ENCODE measurements at regions of chr1 and their contacts with region 1.

Region 1: GRCh38 chr1:15684468-15685291 is 560 bp downstream of the PLEKHM2 start:
- DNase-seq: peak; percentile 77
- H3K4me3 ChIP-seq: peak overlapping the region; percentile 66 to 97 (median 82)
- H3K27ac ChIP-seq: peak overlapping the region; percentile 87 to 97 (median 92)
- H3K4me1 ChIP-seq: peaks cover 0 to 22% (median 16%) of the 10 kb centered on the region in 4 donors
- H3K27me3 ChIP-seq: no peaks in the 10 kb centered on the region
- CTCF ChIP-seq: peak in 3 of 4 experiments; percentile 8 to 18 (median 11)
- EP300 ChIP-seq: no peak
- POLR2A ChIP-seq: no peak

Region 2: DNA sequence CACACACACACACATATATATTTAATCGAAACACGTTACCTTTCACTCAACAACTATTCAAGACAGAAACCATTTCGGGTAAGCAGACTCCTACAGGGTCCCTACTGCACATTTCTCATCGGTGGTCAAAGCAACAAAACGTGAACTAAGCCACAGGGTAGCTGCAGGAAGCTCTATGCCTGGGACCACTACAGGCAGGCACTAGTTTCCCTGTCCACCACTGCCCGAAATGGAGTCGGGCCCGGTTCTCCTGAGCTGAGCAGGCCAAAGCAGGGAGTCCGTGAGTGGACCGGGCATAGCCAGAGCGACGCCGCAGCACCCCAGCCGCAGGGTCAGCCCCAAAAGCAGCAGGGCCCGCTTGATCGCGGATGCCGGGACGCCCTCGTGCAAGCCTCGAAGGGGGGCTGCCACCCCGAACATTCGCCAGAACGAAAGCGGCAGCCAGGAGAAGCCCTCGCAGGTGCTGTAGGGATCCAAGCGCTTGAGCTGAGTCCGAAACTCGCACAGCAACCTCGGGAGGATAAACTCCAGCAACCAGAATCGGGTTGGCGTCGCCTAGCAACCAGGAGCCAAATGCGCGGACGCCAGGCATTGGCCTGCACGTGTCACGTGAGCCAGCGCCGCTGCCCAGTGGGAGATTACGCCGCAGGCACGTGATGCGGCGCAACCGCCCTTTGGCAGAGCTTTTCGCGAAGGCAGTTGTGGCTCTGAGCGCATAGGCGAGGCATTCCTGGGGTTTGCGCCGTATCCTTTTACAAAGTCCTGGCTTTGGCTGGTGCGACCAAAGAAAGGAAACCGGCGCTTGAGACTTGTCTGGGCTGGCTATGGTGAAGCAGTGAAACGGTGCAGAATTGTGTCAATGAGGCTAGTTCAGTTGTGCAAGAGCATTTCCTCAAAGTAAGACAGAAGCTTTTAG is 81.4 kb before region 1 on chr1:
- intact Hi-C with region 1: loop called (anchors 5 kb)
- DNase-seq: peak; percentile 99
- H3K4me3 ChIP-seq: peak overlapping the region; percentile 63 to 83 (median 76)
- H3K27ac ChIP-seq: peak overlapping the region; percentile 86 to 91 (median 88)
- H3K4me1 ChIP-seq: peaks cover 0 to 22% (median 16%) of the 10 kb centered on the region in 4 donors
- H3K27me3 ChIP-seq: no peaks in the 10 kb centered on the region
- CTCF ChIP-seq: no peak
- EP300 ChIP-seq: no peak
- POLR2A ChIP-seq: peak; percentile 36 to 38

Region 3: GRCh38 chr1:15703562-15703961 is 18.9 kb after region 1 on chr1:
- intact Hi-C with region 1: loop called (anchors 2 kb)
- DNase-seq: peak; percentile 94
- H3K4me3 ChIP-seq: peak overlapping the region in 2 of 4 donors; percentile 4 to 21
- H3K27ac ChIP-seq: peak overlapping the region; percentile 86 to 90 (median 89)
- H3K4me1 ChIP-seq: peaks cover 0 to 63% (median 59%) of the 10 kb centered on the region in 4 donors
- H3K27me3 ChIP-seq: no peaks in the 10 kb centered on the region
- CTCF ChIP-seq: no peak
- EP300 ChIP-seq: peak in 2 of 4 donors; percentile 44 to 74
- POLR2A ChIP-seq: no peak

Region 4: GRCh38 chr1:15741183-15741850 is 56.6 kb after region 1 on chr1:
- intact Hi-C with region 1: loop called (anchors 2 kb)
- DNase-seq: peak; percentile 91
- H3K4me3 ChIP-seq: no peak overlapping the region
- H3K27ac ChIP-seq: no peak overlapping the region
- H3K4me1 ChIP-seq: peaks cover 0 to 5% (median under 1%) of the 10 kb centered on the region in 4 donors
- H3K27me3 ChIP-seq: no peaks in the 10 kb centered on the region
- CTCF ChIP-seq: peak; percentile 77 to 93 (median 84)
- EP300 ChIP-seq: no peak
- POLR2A ChIP-seq: peak in 1 of 2 donors; percentile 27

Region 5: DNA sequence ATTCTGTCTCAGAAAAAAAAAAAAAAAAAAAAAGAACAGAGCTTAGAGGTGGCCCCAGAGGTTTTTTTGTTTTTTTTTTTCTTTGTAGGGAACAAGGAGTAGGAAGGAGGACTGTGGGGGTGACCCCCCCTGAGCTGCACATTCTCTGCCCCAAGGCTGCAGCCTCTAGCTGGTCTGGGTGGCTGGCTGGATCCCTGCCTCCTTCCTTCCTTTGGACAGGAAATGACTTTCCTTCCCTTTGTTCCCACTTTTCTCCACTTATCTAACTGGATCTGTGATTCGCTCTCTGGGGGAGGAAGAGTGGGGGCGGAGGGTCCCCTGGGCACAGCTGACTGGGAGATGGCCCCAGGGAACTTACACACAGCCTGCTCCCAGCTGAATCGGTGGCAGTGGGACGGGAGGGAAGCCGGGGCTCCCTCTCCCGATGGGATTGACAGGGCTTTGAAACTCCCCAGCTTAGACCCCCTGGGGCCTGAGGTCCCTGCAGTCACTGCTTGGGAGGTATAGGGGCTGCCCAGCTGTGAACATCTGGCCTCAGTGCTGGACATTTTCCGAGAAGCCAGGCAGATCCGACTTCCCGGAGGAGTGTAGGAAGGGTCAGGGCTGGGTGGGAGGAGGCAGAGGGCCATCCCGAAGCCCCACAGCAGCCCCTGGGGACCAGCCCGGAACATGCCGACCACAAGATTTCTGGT is 76.0 kb after region 1 on chr1:
- intact Hi-C with region 1: loop called (anchors 2 kb)
- DNase-seq: peak; percentile 82
- H3K4me3 ChIP-seq: peak overlapping the region in 3 of 4 donors; percentile 19 to 91 (median 84)
- H3K27ac ChIP-seq: peak overlapping the region; percentile 79 to 84 (median 81)
- H3K4me1 ChIP-seq: peaks cover 0 to 54% (median 46%) of the 10 kb centered on the region in 4 donors
- H3K27me3 ChIP-seq: peaks cover 0 to 13% (median 2%) of the 10 kb centered on the region in 3 donors
- CTCF ChIP-seq: no peak
- EP300 ChIP-seq: no peak
- POLR2A ChIP-seq: no peak

Measured in sigmoid colon (tissue), 7 donors.